GM12878 (cell line): ENCODE measurements at regions of chr7 and their contacts with region 1.

Region 1: DNA sequence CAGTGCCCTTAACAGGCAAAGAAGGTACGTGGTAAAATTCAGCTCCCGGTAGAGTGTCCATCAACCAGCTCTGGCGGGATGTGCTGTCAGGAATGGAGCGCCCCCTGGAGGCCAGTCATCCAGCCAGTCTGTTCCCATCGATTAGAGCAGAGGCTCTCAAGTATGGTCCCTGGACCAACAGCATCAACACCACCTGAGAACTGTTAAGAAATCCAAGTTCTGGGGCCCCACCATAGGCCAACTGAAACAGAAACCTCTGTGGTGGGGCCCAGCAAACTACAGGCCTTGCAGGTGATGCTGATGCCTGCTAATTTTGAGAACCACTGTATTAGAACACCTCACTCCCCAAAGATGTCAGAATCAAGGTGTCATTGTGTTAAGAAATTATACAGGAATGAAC is 109.2 kb downstream of the DPY19L1 start:
- DNase-seq: no peak
- ATAC-seq: peak; percentile 98
- H3K4me3 ChIP-seq: no peak overlapping the region
- H3K27ac ChIP-seq: no peak overlapping the region
- H3K4me1 ChIP-seq: no peaks in the 10 kb centered on the region
- H3K27me3 ChIP-seq: no peaks in the 10 kb centered on the region
- CTCF ChIP-seq: peak; percentile 59 to 64 (median 61)
- EP300 ChIP-seq: no peak
- POLR2A ChIP-seq: no peak
- RAD21 ChIP-seq: peak; percentile 44

Region 2: DNA sequence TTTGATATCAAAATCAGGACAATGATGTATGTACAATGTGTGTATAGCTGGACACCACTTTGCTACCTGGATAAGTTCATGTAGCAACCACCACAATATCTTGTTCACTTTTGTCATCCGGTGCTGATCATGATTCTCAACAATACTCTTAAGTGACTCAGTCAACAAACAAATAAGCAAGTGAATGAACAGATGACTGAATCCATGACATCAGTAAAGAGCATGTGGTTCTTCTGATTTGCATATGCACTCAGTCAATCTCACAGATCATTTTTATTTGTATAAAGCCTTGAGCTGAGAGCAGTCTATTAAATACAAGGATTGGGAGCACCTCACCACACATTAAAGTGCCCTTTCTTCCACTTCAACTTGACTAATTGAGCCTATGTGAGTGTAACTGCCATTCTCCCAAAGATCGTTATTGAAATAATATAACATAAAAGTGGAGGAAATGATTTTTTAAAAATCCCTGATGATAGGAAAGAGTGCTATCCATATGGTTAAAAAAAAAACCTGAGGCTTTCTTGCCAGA is 200.5 kb before region 1 on chr7:
- CTCF ChIA-PET with region 1: interaction called, 10 read pairs
- POLR2A ChIA-PET with region 1: no interaction called
- RAD21 ChIA-PET with region 1: no interaction called
- SMC1A ChIA-PET with region 1: interaction called, 4 read pairs
- in situ Hi-C with region 1: no loop called
- intact Hi-C with region 1: no loop called
- DNase-seq: no peak
- ATAC-seq: peak; percentile 76
- H3K4me3 ChIP-seq: no peak overlapping the region
- H3K27ac ChIP-seq: no peak overlapping the region
- H3K4me1 ChIP-seq: no peaks in the 10 kb centered on the region
- H3K27me3 ChIP-seq: no peaks in the 10 kb centered on the region
- CTCF ChIP-seq: no peak
- EP300 ChIP-seq: no peak
- POLR2A ChIP-seq: no peak
- RAD21 ChIP-seq: no peak

Region 3: GRCh38 chr7:34823640-34824258 is 104.3 kb before region 1 on chr7:
- CTCF ChIA-PET with region 1: interaction called, 11 read pairs
- POLR2A ChIA-PET with region 1: no interaction called
- RAD21 ChIA-PET with region 1: no interaction called
- SMC1A ChIA-PET with region 1: interaction called, 8 read pairs
- in situ Hi-C with region 1: no loop called
- intact Hi-C with region 1: no loop called
- DNase-seq: no peak
- ATAC-seq: peak; percentile 87
- H3K4me3 ChIP-seq: no peak overlapping the region
- H3K27ac ChIP-seq: no peak overlapping the region
- H3K4me1 ChIP-seq: no peaks in the 10 kb centered on the region
- H3K27me3 ChIP-seq: no peaks in the 10 kb centered on the region
- CTCF ChIP-seq: peak; percentile 74 to 86 (median 79)
- EP300 ChIP-seq: no peak
- POLR2A ChIP-seq: no peak
- RAD21 ChIP-seq: peak; percentile 74

Region 4: DNA sequence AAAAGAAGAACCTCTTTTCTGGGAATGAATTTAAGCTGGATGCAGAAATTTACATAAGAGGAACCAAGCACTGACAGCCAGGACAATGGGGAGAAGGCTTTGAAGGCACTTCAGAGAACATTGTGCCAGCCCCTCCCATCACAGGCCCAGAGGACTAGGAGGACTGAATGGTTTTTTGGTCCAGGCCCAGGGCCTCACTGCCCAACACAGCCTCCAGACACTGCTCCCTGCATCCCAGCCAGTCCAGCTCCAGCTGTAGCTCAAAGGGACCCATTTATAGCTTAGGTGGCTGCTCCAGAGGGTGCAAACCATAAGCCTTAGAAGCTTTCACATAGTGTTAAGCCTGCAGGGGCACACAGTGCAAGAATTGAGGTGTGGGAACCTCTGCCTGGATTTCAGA is 32.8 kb before region 1 on chr7:
- CTCF ChIA-PET with region 1: no interaction called
- POLR2A ChIA-PET with region 1: no interaction called
- RAD21 ChIA-PET with region 1: no interaction called
- SMC1A ChIA-PET with region 1: no interaction called
- in situ Hi-C with region 1: no loop called
- intact Hi-C with region 1: no loop called
- DNase-seq: no peak
- ATAC-seq: no peak
- H3K4me3 ChIP-seq: no peak overlapping the region
- H3K27ac ChIP-seq: no peak overlapping the region
- H3K4me1 ChIP-seq: no peaks in the 10 kb centered on the region
- H3K27me3 ChIP-seq: no peaks in the 10 kb centered on the region
- CTCF ChIP-seq: no peak
- EP300 ChIP-seq: no peak
- POLR2A ChIP-seq: no peak
- RAD21 ChIP-seq: no peak

Region 5: DNA sequence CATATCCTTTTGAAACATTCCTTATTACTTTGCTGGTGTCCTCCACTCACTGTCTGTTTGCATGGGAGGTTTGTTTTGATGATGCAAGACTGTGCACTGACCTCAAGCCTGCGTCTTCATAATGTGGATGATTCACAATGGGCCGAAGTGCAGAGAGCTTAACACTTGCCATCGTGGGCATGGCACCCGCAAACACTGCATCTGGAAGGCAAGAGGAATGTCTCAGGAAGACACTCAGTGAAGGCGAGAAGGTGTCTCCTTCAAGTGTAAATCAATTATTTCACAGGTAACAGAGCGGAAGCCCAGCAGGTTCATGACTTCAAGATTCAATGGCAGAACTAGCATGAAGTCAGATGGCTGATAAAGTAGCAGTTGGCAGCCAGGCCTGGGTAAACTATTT is 11.1 kb after region 1 on chr7:
- CTCF ChIA-PET with region 1: interaction called, 13 read pairs
- POLR2A ChIA-PET with region 1: no interaction called
- RAD21 ChIA-PET with region 1: no interaction called
- SMC1A ChIA-PET with region 1: no interaction called
- in situ Hi-C with region 1: no loop called
- intact Hi-C with region 1: no loop called
- DNase-seq: no peak
- ATAC-seq: no peak
- H3K4me3 ChIP-seq: no peak overlapping the region
- H3K27ac ChIP-seq: no peak overlapping the region
- H3K4me1 ChIP-seq: no peaks in the 10 kb centered on the region
- H3K27me3 ChIP-seq: no peaks in the 10 kb centered on the region
- CTCF ChIP-seq: no peak
- EP300 ChIP-seq: no peak
- POLR2A ChIP-seq: no peak
- RAD21 ChIP-seq: no peak